IMR-90 (cell line): ENCODE measurements at regions of chr4 and their contacts with region 1.

Region 1: DNA sequence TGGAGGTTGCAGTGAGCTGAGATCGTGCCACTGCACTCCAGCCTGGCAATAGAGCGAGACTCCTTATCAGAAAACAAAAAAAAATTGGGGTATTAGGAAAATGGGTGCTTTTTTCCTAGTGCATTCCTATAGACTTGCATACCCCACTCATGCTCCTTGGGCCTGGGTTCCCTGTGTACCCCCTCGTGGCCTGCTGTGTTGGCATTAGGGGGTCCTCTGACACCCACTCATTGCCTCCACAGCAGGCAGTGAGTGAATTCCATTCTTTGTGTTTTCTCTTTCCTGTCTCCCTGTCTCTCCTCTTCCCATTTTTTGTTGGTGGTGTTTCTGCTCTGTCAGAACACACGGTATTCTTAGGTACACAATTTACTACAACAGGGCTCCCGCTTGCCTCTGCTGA is 42.8 kb downstream of the TNIP2 start:
- DNase-seq: no peak
- ATAC-seq: no peak
- H3K4me3 ChIP-seq: no peak overlapping the region
- H3K27ac ChIP-seq: no peak overlapping the region
- H3K4me1 ChIP-seq: peaks cover 3% of the 10 kb centered on the region; the same call in 1 of the 2 replicates
- H3K27me3 ChIP-seq: no peaks in the 10 kb centered on the region
- CTCF ChIP-seq: no peak
- POLR2A ChIP-seq: no peak
- RAD21 ChIP-seq: no peak

Region 2: GRCh38 chr4:2685541-2685940 is 27.8 kb before region 1 on chr4:
- CTCF ChIA-PET with region 1: no interaction called
- POLR2A ChIA-PET with region 1: no interaction called
- dilution Hi-C with region 1: no loop called
- in situ Hi-C with region 1: no loop called
- intact Hi-C with region 1: no loop called
- DNase-seq: peak; percentile 66
- ATAC-seq: peak; percentile 71
- H3K4me3 ChIP-seq: no peak overlapping the region
- H3K27ac ChIP-seq: no peak overlapping the region
- H3K4me1 ChIP-seq: no peaks in the 10 kb centered on the region
- H3K27me3 ChIP-seq: no peaks in the 10 kb centered on the region
- CTCF ChIP-seq: no peak
- POLR2A ChIP-seq: no peak
- RAD21 ChIP-seq: no peak

Region 3: DNA sequence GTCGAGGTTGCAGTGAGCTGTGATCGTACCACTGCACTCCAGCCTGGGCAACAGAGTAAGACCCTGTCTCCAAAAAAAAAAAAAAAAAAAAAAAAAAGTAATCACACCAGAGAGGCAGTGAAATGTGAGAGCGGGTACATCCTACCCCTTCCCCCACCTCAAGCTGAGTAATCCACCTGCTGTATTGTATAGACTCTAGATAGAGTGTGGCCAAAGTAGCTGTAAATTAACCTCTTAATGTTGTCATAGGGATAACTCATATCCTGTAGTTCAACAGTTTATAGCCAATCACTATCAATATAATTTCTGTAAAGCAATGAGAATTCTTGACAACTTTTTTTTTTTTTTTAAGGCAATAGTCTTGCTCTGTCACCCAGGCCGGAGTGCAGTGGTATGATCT is 12.0 kb after region 1 on chr4:
- CTCF ChIA-PET with region 1: interaction called, 10 read pairs
- POLR2A ChIA-PET with region 1: no interaction called
- dilution Hi-C with region 1: no loop called
- in situ Hi-C with region 1: no loop called
- intact Hi-C with region 1: no loop called
- DNase-seq: no peak
- ATAC-seq: no peak
- H3K4me3 ChIP-seq: no peak overlapping the region
- H3K27ac ChIP-seq: no peak overlapping the region
- H3K4me1 ChIP-seq: no peaks in the 10 kb centered on the region
- H3K27me3 ChIP-seq: no peaks in the 10 kb centered on the region
- CTCF ChIP-seq: no peak
- POLR2A ChIP-seq: no peak
- RAD21 ChIP-seq: no peak